ENCODE measurements at regions of chr4 and their contacts with region 1.

Region 1: GRCh38 chr4:147924604-147925412 is 192.9 kb downstream of the ARHGAP10 start:
- DNase-seq: peak; percentile 66
- H3K4me3 ChIP-seq: no peak overlapping the region
- H3K27ac ChIP-seq: no peak overlapping the region
- H3K4me1 ChIP-seq: peaks cover 0 to 13% of the 10 kb centered on the region in 2 experiments; a peak in 2 of 4 replicates
- H3K27me3 ChIP-seq: no peaks in the 10 kb centered on the region
- CTCF ChIP-seq: peak; percentile 51
- EP300 ChIP-seq: no peak
- RAD21 ChIP-seq: peak; percentile 77

Region 2: GRCh38 chr4:147909225-147909624 is 15.6 kb before region 1 on chr4:
- CTCF ChIA-PET with region 1: interaction called, 12 read pairs
- POLR2A ChIA-PET with region 1: no interaction called
- DNase-seq: no peak
- H3K4me3 ChIP-seq: no peak overlapping the region
- H3K27ac ChIP-seq: no peak overlapping the region
- H3K4me1 ChIP-seq: no peaks in the 10 kb centered on the region; a peak in 1 of 4 replicates
- H3K27me3 ChIP-seq: no peaks in the 10 kb centered on the region
- CTCF ChIP-seq: no peak
- EP300 ChIP-seq: no peak
- RAD21 ChIP-seq: no peak

Region 3: GRCh38 chr4:148090503-148091476 is 166.0 kb after region 1 on chr4:
- CTCF ChIA-PET with region 1: no interaction called
- POLR2A ChIA-PET with region 1: no interaction called
- DNase-seq: no peak
- H3K4me3 ChIP-seq: no peak overlapping the region
- H3K27ac ChIP-seq: no peak overlapping the region
- H3K4me1 ChIP-seq: peaks cover 0 to 5% of the 10 kb centered on the region in 2 experiments; a peak in 1 of 4 replicates
- H3K27me3 ChIP-seq: no peaks in the 10 kb centered on the region
- CTCF ChIP-seq: no peak
- EP300 ChIP-seq: no peak
- RAD21 ChIP-seq: no peak